ENCODE measurements at regions of chr2 and their contacts with region 1.

Region 1: GRCh38 chr2:64750817-64751285 is 97.1 kb upstream of the SERTAD2 start:
- DNase-seq: peak; percentile 99
- ATAC-seq: peak; percentile 91
- H3K4me3 Mint-ChIP-seq: peak overlapping the region; percentile 80
- H3K27ac Mint-ChIP-seq: peak overlapping the region; percentile 98
- H3K4me1 Mint-ChIP-seq: peaks cover 27% of the 10 kb centered on the region
- H3K27me3 Mint-ChIP-seq: no peaks in the 10 kb centered on the region

Region 2: DNA sequence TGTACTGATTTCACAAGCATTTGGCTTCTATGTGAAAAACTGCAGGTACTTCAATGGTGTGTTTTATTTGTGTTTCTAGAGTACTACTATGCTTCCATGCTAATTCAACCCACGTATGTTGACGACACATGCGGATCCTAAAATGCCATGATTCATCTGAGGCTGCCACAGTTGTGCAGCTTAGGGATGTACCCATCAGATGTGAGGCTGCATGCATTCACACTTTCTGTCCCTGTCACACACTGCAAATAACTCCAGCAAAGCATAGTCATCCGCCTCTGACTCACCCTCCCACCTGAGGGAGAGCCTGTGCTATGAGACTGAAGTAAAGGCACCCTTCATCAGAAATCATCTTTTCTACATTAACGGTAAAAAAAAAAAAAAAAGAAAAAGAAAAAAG is 75.0 kb before region 1 on chr2:
- CTCF ChIA-PET with region 1: interaction called, 4 read pairs
- POLR2A ChIA-PET with region 1: interaction called, 11 read pairs
- DNase-seq: peak; percentile 49
- ATAC-seq: peak; percentile 81
- H3K4me3 Mint-ChIP-seq: no peak overlapping the region
- H3K27ac Mint-ChIP-seq: no peak overlapping the region
- H3K4me1 Mint-ChIP-seq: peaks cover 47% of the 10 kb centered on the region
- H3K27me3 Mint-ChIP-seq: no peaks in the 10 kb centered on the region

Region 3: GRCh38 chr2:64730551-64731262 is 20.1 kb before region 1 on chr2:
- CTCF ChIA-PET with region 1: interaction called, 23 read pairs
- POLR2A ChIA-PET with region 1: interaction called, 33 read pairs
- DNase-seq: peak; percentile 60
- ATAC-seq: peak; percentile 72
- H3K4me3 Mint-ChIP-seq: peak overlapping the region; percentile 81
- H3K27ac Mint-ChIP-seq: peak overlapping the region; percentile 92
- H3K4me1 Mint-ChIP-seq: peaks cover 75% of the 10 kb centered on the region
- H3K27me3 Mint-ChIP-seq: no peaks in the 10 kb centered on the region

Region 4: DNA sequence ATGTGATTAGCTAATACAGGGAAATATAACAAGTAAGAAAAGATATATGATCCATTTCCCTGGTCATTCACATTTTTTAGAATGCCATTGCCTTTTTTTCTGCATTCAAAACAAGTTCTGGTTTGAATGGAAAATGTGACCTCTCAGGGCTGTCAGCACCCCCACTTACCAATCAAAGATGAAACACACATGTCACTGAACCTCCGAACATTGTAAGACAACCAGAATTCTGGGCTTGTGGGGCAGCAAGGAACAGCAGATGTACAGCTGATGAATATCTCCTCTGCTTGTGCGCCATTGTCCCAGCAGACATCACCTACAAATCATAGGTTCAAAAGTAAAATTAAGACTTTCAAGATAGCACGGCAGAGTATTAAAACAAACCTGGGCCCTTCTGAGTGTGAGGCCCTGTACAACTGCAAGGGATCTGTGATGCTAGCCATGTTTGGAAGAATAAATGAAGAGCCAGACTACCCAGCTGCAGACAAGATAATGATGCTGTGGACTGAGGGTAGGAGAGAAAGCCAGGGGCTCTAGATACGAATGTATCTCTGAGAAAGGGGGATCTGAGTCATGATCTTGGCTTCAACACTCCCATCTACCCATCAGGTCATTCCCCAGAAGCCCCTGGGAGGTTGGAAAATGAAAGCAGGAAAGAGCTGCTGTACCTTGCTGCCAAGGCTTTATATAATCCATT is 11.6 kb after region 1 on chr2:
- CTCF ChIA-PET with region 1: interaction called, 42 read pairs
- POLR2A ChIA-PET with region 1: interaction called, 53 read pairs
- DNase-seq: no peak
- ATAC-seq: no peak
- H3K4me3 Mint-ChIP-seq: no peak overlapping the region
- H3K27ac Mint-ChIP-seq: no peak overlapping the region
- H3K4me1 Mint-ChIP-seq: peaks cover 33% of the 10 kb centered on the region
- H3K27me3 Mint-ChIP-seq: no peaks in the 10 kb centered on the region

Region 5: GRCh38 chr2:64831134-64831976 is 80.5 kb after region 1 on chr2:
- CTCF ChIA-PET with region 1: interaction called, 44 read pairs
- POLR2A ChIA-PET with region 1: interaction called, 5 read pairs
- DNase-seq: peak; percentile 86
- ATAC-seq: peak; percentile 87
- H3K4me3 Mint-ChIP-seq: peak overlapping the region; percentile 22
- H3K27ac Mint-ChIP-seq: peak overlapping the region; percentile 63
- H3K4me1 Mint-ChIP-seq: peaks cover 22% of the 10 kb centered on the region
- H3K27me3 Mint-ChIP-seq: peaks cover 16% of the 10 kb centered on the region